ENCODE measurements at regions of chr10 and their contacts with region 1.

Region 1: GRCh38 chr10:13299437-13300287 is at the start of gene PHYH:
- DNase-seq: peak; percentile 78
- H3K4me3 ChIP-seq: peak within 1 kb of the TSS; percentile 63 to 68 (median 64)
- H3K27ac ChIP-seq: peak within 1 kb of the TSS; percentile 72
- H3K4me1 ChIP-seq: peaks cover 5% of the 10 kb centered on the region
- H3K27me3 ChIP-seq: no peaks in the 10 kb centered on the region
- CTCF ChIP-seq: no peak
- POLR2A ChIP-seq: peak; percentile 89
- total RNA-seq, gene PHYH: 9.4 and 9.8 TPM in 2 replicates

Region 2: DNA sequence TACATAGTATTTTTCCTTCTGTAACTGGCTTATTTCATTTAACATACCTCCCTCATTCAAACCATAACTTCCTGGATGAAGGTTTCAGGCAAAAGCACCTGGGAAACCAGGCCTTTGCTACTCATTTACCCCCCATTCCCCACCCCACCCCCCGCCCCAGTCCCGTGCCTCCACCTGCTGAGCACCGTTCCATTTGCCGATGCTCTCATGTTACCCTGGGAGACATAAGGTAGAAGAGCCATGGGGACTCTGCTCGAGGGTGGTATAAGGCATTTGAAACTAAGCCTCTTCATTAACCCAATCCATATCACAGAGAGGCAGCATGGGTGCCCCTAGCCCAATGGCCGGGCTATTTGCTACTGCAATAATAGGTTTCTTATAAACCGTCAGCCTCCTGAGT is 160.5 kb before region 1 on chr10:
- CTCF ChIA-PET with region 1: no interaction called
- POLR2A ChIA-PET with region 1: no interaction called
- dilution Hi-C with region 1: no loop called
- intact Hi-C with region 1: no loop called
- DNase-seq: no peak
- H3K4me3 ChIP-seq: no peak overlapping the region
- H3K27ac ChIP-seq: no peak overlapping the region
- H3K4me1 ChIP-seq: no peaks in the 10 kb centered on the region
- H3K27me3 ChIP-seq: no peaks in the 10 kb centered on the region
- CTCF ChIP-seq: no peak
- POLR2A ChIP-seq: no peak

Region 3: GRCh38 chr10:13160934-13161856 is 138.5 kb before region 1 on chr10 and contains the start of gene MCM10:
- CTCF ChIA-PET with region 1: interaction called, 50 read pairs
- POLR2A ChIA-PET with region 1: no interaction called
- dilution Hi-C with region 1: no loop called
- intact Hi-C with region 1: loop called (anchors 1 kb)
- DNase-seq: peak; percentile 99
- H3K4me3 ChIP-seq: peak within 1 kb of the TSS; percentile 71 to 93 (median 85)
- H3K27ac ChIP-seq: peak within 1 kb of the TSS; percentile 52
- H3K4me1 ChIP-seq: peaks cover 13% of the 10 kb centered on the region
- H3K27me3 ChIP-seq: no peaks in the 10 kb centered on the region
- CTCF ChIP-seq: peak; percentile 85 to 93
- POLR2A ChIP-seq: peak; percentile 49
- total RNA-seq, gene MCM10: 28.7 and 31.6 TPM in 2 replicates

Region 4: DNA sequence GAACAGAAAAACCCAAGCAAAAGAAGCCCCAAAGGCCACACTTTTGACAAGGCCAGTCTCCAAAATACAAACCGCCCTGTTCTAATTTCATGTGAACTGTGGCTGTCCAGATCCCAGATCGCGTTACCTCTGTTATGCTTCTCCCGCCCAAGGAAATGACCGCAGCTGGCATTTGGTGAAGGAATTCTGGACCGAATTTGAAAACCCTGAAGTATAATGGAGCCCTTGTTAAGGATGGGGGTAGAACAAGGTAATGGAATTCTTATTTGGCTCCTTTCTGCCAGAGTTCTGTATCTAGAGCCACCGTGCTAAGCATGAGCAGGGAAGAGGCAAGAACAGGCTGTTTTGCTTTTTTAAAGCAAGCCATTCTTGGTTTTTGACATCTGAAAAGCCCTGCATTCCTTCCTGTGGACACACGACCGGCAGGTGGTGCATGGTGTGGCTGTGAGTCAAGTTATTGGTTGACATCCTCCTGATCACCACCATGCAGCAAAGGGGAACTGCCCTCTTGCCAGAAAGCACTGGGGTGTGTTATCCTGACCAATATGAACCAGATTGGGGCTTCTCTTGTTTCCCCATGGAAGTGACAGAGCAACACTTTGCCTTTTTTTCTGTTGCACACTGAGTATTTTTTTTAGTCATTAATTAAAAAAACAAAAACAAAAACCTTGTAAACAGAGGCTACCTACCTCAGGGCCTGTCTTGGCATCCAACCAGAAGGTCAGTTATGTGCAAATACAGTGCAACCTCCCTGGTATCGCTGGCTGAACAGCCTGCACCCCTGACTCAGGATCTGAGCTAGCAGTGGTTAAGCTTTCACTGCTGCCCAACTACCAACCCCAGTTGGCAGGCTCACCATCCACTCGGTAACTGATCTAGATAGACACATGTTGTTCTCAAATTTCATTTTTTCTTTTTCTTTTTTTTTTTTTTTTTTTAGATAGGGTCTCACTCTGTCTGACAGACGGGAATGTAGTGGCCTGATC is 79.7 kb before region 1 on chr10:
- CTCF ChIA-PET with region 1: interaction called, 10 read pairs
- POLR2A ChIA-PET with region 1: no interaction called
- dilution Hi-C with region 1: no loop called
- intact Hi-C with region 1: no loop called
- DNase-seq: no peak
- H3K4me3 ChIP-seq: no peak overlapping the region
- H3K27ac ChIP-seq: no peak overlapping the region
- H3K4me1 ChIP-seq: no peaks in the 10 kb centered on the region
- H3K27me3 ChIP-seq: no peaks in the 10 kb centered on the region
- CTCF ChIP-seq: peak in 1 of 2 donors; percentile 6
- POLR2A ChIP-seq: no peak

Region 5: GRCh38 chr10:13317474-13317873 is 17.8 kb after region 1 on chr10:
- CTCF ChIA-PET with region 1: interaction called, 40 read pairs
- POLR2A ChIA-PET with region 1: interaction called, 3 read pairs
- dilution Hi-C with region 1: no loop called
- intact Hi-C with region 1: no loop called
- DNase-seq: peak; percentile 59
- H3K4me3 ChIP-seq: no peak overlapping the region
- H3K27ac ChIP-seq: no peak overlapping the region
- H3K4me1 ChIP-seq: peaks cover 4% of the 10 kb centered on the region
- H3K27me3 ChIP-seq: no peaks in the 10 kb centered on the region
- CTCF ChIP-seq: no peak
- POLR2A ChIP-seq: no peak

Region 6: GRCh38 chr10:13528875-13529713 is 229.4 kb after region 1 on chr10 and contains the start of gene BEND7:
- CTCF ChIA-PET with region 1: no interaction called
- POLR2A ChIA-PET with region 1: no interaction called
- dilution Hi-C with region 1: no loop called
- intact Hi-C with region 1: loop called (anchors 1 kb)
- DNase-seq: peak; percentile 24
- H3K4me3 ChIP-seq: peak within 1 kb of the TSS; percentile 60 to 88 (median 84)
- H3K27ac ChIP-seq: peak within 1 kb of the TSS; percentile 76
- H3K4me1 ChIP-seq: peaks cover 26% of the 10 kb centered on the region
- H3K27me3 ChIP-seq: no peaks in the 10 kb centered on the region
- CTCF ChIP-seq: no peak
- POLR2A ChIP-seq: no peak
- total RNA-seq, gene BEND7: 30.8 and 31.7 TPM in 2 replicates